ENCODE measurements at regions of chr2 and their contacts with region 1.

Region 1: GRCh38 chr2:105117565-105117964 is 79.7 kb downstream of the MRPS9 start:
- DNase-seq: peak; percentile 81
- H3K4me3 ChIP-seq: no peak overlapping the region
- H3K27ac ChIP-seq: no peak overlapping the region
- H3K4me1 ChIP-seq: peaks cover 0 to 4% (median 0%) of the 10 kb centered on the region in 4 donors
- H3K27me3 ChIP-seq: peaks cover 0 to 4% (median 0%) of the 10 kb centered on the region in 4 donors
- CTCF ChIP-seq: no peak
- EP300 ChIP-seq: no peak
- POLR2A ChIP-seq: no peak

Region 2: GRCh38 chr2:105235388-105236054 is 118.0 kb after region 1 on chr2:
- intact Hi-C with region 1: loop called (anchors 2 kb)
- DNase-seq: peak; percentile 94
- H3K4me3 ChIP-seq: no peak overlapping the region
- H3K27ac ChIP-seq: no peak overlapping the region
- H3K4me1 ChIP-seq: peaks cover 0 to 13% (median 5%) of the 10 kb centered on the region in 4 donors
- H3K27me3 ChIP-seq: peaks cover 0 to 8% (median 0%) of the 10 kb centered on the region in 4 donors
- CTCF ChIP-seq: peak; percentile 47 to 63 (median 57)
- EP300 ChIP-seq: no peak
- POLR2A ChIP-seq: no peak

Measured in esophagus muscularis mucosa (tissue), 4 donors.